B cell (primary cell): ENCODE measurements at regions of chr18 and their contacts with region 1.

Region 1: GRCh38 chr18:45879681-45880655 is 54.5 kb downstream of the SIGLEC15 start:
- DNase-seq: peak; percentile 76
- ATAC-seq: peak; percentile 95
- H3K4me3 ChIP-seq: no peak overlapping the region
- H3K4me3 Mint-ChIP-seq: no peak overlapping the region
- H3K27ac ChIP-seq: no peak overlapping the region
- H3K27ac Mint-ChIP-seq: no peak overlapping the region
- H3K4me1 ChIP-seq: peaks cover 2 to 6% of the 10 kb centered on the region in 2 donors
- H3K4me1 Mint-ChIP-seq: peaks cover 9% of the 10 kb centered on the region
- H3K27me3 ChIP-seq: no peaks in the 10 kb centered on the region
- H3K27me3 Mint-ChIP-seq: no peaks in the 10 kb centered on the region
- CTCF ChIP-seq: peak; percentile 100

Region 2: DNA sequence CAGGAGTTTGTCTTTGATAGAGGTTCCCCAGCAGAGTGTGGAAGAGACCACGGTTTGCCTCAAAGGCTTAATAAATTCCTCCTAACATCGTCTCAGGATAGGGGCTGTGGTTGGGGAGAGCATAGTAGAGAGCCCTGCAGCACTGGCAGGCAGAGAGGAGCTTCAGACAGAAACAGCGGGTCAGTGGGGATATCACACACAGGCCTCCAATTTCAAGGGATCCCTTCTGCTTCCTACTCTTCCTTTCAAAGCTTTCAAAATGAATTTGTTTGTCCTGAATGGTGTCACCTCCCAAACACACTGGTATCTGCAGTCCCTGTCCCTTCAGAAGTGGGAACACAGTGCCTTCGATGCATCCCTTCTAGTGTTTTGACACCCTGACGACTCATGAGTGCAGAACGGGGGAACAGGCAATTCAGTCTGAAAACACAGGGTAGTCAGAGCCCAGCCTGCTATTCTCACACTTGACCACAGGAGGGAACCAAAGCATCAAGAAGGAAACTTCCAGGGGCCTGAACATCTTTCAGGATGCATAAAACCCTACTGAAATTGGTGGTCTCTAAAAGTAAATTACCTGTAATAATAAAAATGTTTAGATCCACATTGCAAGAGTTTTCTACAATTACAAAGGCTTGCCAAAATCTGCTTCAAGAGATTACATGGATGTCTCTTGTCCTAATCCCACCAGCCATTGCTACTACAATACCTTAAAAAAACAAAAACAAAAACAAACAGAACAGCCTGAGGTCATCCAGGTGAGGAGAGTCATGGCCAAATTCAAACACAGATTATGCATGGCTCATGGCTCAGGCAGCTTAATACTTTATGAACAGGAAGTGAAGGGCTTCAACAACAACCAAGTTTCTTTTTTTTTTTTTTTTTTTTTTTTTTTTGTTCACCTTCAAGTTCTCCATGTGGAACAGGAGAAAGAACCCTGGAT is 214.9 kb before region 1 on chr18:
- CTCF ChIA-PET with region 1: interaction called, 291 read pairs
- POLR2A ChIA-PET with region 1: interaction called, 6 read pairs
- intact Hi-C with region 1: loop called (anchors 1 kb)
- DNase-seq: peak; percentile 78
- ATAC-seq: peak; percentile 82
- H3K4me3 ChIP-seq: no peak overlapping the region
- H3K4me3 Mint-ChIP-seq: no peak overlapping the region
- H3K27ac ChIP-seq: no peak overlapping the region
- H3K27ac Mint-ChIP-seq: peak overlapping the region; percentile 67
- H3K4me1 ChIP-seq: peaks cover 13 to 26% of the 10 kb centered on the region in 2 donors
- H3K4me1 Mint-ChIP-seq: peaks cover 39% of the 10 kb centered on the region
- H3K27me3 ChIP-seq: no peaks in the 10 kb centered on the region
- H3K27me3 Mint-ChIP-seq: no peaks in the 10 kb centered on the region
- CTCF ChIP-seq: peak; percentile 97

Region 3: GRCh38 chr18:45722899-45723298 is 157.1 kb before region 1 on chr18:
- CTCF ChIA-PET with region 1: interaction called, 70 read pairs
- POLR2A ChIA-PET with region 1: no interaction called
- intact Hi-C with region 1: no loop called
- DNase-seq: peak; percentile 46
- ATAC-seq: peak; percentile 69
- H3K4me3 ChIP-seq: no peak overlapping the region
- H3K4me3 Mint-ChIP-seq: no peak overlapping the region
- H3K27ac ChIP-seq: no peak overlapping the region
- H3K27ac Mint-ChIP-seq: no peak overlapping the region
- H3K4me1 ChIP-seq: no peaks in the 10 kb centered on the region
- H3K4me1 Mint-ChIP-seq: no peaks in the 10 kb centered on the region
- H3K27me3 ChIP-seq: no peaks in the 10 kb centered on the region
- H3K27me3 Mint-ChIP-seq: peaks cover 6% of the 10 kb centered on the region
- CTCF ChIP-seq: peak; percentile 78

Region 4: DNA sequence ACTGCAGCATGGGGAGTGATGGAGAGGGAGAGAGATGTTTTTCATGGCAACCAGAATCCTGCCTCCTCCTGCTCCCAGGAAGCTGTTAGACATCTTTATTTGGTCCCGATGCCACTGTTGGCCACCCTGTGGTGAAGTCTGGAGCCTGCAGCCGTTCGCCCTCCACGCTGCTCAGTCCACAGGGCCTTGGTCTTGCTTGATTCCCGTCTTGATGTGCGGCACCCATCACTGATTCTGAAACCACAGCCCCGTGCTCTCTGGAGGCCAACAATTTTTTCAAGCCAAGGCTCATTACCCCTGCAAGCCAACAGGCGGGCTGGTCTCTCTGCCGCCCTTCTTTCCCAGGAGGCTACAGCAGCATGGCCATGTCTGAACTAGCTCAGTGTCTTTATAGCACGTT is 29.9 kb before region 1 on chr18:
- CTCF ChIA-PET with region 1: interaction called, 18 read pairs
- POLR2A ChIA-PET with region 1: no interaction called
- intact Hi-C with region 1: no loop called
- DNase-seq: no peak
- ATAC-seq: no peak
- H3K4me3 ChIP-seq: no peak overlapping the region
- H3K4me3 Mint-ChIP-seq: no peak overlapping the region
- H3K27ac ChIP-seq: no peak overlapping the region
- H3K27ac Mint-ChIP-seq: peak overlapping the region; percentile 4
- H3K4me1 ChIP-seq: no peaks in the 10 kb centered on the region
- H3K4me1 Mint-ChIP-seq: peaks cover 1% of the 10 kb centered on the region
- H3K27me3 ChIP-seq: no peaks in the 10 kb centered on the region
- H3K27me3 Mint-ChIP-seq: no peaks in the 10 kb centered on the region
- CTCF ChIP-seq: peak; percentile 19

Region 5: GRCh38 chr18:45890606-45891005 is 10.6 kb after region 1 on chr18:
- CTCF ChIA-PET with region 1: interaction called, 16 read pairs
- POLR2A ChIA-PET with region 1: no interaction called
- intact Hi-C with region 1: no loop called
- DNase-seq: no peak
- ATAC-seq: no peak
- H3K4me3 ChIP-seq: no peak overlapping the region
- H3K4me3 Mint-ChIP-seq: no peak overlapping the region
- H3K27ac ChIP-seq: no peak overlapping the region
- H3K27ac Mint-ChIP-seq: no peak overlapping the region
- H3K4me1 ChIP-seq: no peaks in the 10 kb centered on the region
- H3K4me1 Mint-ChIP-seq: no peaks in the 10 kb centered on the region
- H3K27me3 ChIP-seq: no peaks in the 10 kb centered on the region
- H3K27me3 Mint-ChIP-seq: no peaks in the 10 kb centered on the region
- CTCF ChIP-seq: no peak